ENCODE measurements at regions of chr6 and their contacts with region 1.

Region 1: GRCh38 chr6:100099189-100100074 is 105.4 kb upstream of the MCHR2 start:
- DNase-seq: peak; percentile 4
- H3K4me3 ChIP-seq: no peak overlapping the region
- H3K27ac ChIP-seq: no peak overlapping the region
- H3K4me1 ChIP-seq: no peaks in the 10 kb centered on the region
- H3K27me3 ChIP-seq: peaks cover 17% of the 10 kb centered on the region; the same call in 1 of the 2 replicates
- CTCF ChIP-seq: peak; percentile 81
- EP300 ChIP-seq: no peak
- RAD21 ChIP-seq: peak; percentile 55

Region 2: DNA sequence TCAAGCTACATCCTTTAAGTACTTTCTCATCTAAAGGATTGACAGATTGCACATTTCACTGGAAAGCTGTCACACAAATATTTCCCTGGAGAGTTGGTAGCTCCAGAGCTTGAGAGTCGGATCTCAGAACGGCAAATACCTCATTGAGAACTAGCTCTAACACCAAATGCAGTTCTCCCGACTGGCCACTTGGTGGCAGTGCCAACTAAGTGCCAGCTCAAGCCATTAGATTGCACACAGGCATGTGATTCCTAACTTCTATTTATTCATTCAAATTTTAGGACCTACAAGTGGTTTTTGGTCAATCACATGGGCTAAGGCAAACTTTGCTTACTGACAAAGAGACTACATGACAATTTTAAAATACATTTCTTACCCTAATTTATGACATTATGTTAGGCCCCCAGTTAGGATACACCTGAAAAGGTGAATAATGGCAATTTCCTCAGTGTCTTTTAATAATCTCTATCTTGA is 97.5 kb before region 1 on chr6:
- CTCF ChIA-PET with region 1: interaction called, 32 read pairs
- POLR2A ChIA-PET with region 1: no interaction called
- DNase-seq: peak; percentile 52
- H3K4me3 ChIP-seq: no peak overlapping the region; a peak in 1 of 4 replicates
- H3K27ac ChIP-seq: no peak overlapping the region
- H3K4me1 ChIP-seq: no peaks in the 10 kb centered on the region
- H3K27me3 ChIP-seq: no peaks in the 10 kb centered on the region; the same call in none of the 2 replicates
- CTCF ChIP-seq: peak; percentile 88
- EP300 ChIP-seq: no peak
- RAD21 ChIP-seq: peak; percentile 77

Region 3: DNA sequence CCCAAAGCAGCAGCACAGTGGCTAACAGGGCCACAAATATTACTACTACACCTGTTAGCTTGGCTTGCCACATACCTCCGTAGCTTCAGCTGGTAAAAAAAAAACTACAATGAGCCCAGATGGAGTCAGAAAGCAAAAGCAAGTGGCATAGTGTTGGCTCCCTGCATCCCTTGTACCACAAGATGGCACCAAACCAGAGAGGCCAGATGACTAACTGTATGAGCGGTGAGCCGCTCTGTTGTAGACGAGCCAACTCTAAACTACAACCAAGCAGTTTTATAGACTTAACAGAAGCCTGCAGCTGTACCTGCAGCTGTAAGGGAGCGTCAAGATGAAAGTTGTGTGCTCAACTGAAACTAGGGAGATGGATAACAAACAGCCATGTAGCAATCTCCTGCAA is 20.9 kb before region 1 on chr6:
- CTCF ChIA-PET with region 1: interaction called, 11 read pairs
- POLR2A ChIA-PET with region 1: no interaction called
- DNase-seq: peak; percentile 4
- H3K4me3 ChIP-seq: no peak overlapping the region
- H3K27ac ChIP-seq: no peak overlapping the region
- H3K4me1 ChIP-seq: no peaks in the 10 kb centered on the region
- H3K27me3 ChIP-seq: no peaks in the 10 kb centered on the region; the same call in 1 of the 2 replicates
- CTCF ChIP-seq: peak; percentile 63
- EP300 ChIP-seq: no peak
- RAD21 ChIP-seq: no peak

Region 4: GRCh38 chr6:100404051-100404450 is 304.6 kb after region 1 on chr6:
- CTCF ChIA-PET with region 1: no interaction called
- POLR2A ChIA-PET with region 1: no interaction called
- DNase-seq: no peak
- H3K4me3 ChIP-seq: no peak overlapping the region
- H3K27ac ChIP-seq: no peak overlapping the region
- H3K4me1 ChIP-seq: no peaks in the 10 kb centered on the region
- H3K27me3 ChIP-seq: peaks cover 8% of the 10 kb centered on the region; the same call in 1 of the 2 replicates
- CTCF ChIP-seq: no peak
- EP300 ChIP-seq: no peak
- RAD21 ChIP-seq: no peak